ENCODE measurements at regions of chr9 and their contacts with region 1.

Region 1: DNA sequence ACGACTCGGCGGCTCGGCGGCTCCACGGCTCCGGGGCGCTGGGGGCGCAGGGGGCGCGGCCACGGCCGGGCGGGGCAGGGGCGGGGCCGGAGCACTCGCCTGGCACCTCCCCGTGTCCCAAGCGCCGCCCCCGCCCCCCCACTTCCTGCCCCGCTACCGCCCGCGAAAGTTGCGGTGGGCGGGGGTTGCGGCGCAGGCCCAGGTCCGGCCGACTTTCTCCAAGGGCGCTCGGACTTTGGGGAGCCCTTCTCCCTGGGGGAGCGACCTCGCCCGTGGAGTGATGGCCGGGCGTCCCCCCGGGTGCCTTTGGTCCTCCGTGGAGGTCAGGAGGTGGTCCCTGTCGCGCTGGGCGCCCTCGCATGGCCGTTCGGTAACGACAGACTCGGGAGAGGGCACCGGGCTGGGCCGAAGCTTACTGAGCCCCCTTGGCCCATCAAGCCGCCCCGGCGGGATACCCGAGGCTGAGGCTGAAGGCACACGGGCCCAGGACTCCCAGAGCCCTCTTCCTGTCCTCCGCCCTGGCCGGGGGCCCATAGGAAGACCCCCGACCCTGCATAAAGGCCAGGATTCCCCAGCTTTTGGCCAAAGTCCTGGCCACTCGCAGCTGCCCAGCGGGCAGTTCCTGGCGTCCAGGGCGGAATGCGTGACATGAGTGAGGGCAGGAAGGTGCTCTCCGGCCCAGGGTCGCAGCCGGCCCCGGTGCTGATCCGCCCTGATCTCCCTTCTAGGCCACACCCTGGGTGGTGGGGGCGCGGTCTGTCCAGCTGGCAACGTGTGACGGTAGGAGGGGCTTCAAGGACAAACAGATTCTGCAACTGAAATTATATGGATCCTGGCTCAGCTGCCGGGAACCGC is 883 bp upstream of the VAV2 start:
- DNase-seq: peak in 7 of 10 donors; percentile 39 to 90 (median 52)

Region 2: GRCh38 chr9:133782157-133783130 is 210.6 kb before region 1 on chr9:
- intact Hi-C with region 1: loop called (anchors 2 kb)
- DNase-seq: peak; percentile 74 to 96 (median 84)

Region 3: DNA sequence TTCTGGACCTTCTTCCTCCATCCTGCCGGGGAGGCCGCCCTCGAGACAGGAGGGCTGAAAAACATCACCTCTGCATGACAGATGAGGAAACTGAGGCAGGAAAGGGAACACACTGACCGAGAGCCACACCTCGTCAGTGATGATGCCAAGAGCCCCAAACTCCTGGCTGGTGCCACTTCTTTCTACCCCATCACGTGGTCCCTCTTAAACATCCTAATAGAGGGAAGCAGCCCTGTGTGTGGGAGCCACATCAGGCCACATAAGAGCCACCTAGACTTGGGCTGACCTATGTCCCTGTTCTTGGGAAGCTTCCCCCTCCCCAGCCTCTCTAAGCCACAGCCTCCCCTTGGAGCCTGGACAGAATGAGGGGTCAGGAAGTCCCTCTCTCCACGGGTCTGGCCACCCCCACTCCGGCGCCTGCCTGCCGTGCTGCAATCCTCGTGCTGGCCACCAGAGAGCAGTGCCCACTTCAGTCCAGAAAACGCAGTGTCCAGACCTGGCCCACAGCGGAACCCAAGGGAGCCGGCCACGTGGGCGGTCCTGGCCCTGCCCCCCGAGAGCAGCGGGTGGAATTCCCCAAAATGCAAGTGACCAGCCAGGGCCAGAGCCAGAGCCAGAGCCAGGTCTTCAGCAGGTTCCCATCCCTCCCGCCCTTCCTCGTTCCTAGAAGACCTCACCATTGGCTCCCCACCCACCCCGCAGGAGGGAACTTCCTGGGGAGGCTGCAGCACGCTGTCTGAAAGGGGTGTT is 200.1 kb before region 1 on chr9:
- intact Hi-C with region 1: loop called (anchors 1 kb)
- DNase-seq: peak; percentile 51 to 95 (median 78)

Region 4: DNA sequence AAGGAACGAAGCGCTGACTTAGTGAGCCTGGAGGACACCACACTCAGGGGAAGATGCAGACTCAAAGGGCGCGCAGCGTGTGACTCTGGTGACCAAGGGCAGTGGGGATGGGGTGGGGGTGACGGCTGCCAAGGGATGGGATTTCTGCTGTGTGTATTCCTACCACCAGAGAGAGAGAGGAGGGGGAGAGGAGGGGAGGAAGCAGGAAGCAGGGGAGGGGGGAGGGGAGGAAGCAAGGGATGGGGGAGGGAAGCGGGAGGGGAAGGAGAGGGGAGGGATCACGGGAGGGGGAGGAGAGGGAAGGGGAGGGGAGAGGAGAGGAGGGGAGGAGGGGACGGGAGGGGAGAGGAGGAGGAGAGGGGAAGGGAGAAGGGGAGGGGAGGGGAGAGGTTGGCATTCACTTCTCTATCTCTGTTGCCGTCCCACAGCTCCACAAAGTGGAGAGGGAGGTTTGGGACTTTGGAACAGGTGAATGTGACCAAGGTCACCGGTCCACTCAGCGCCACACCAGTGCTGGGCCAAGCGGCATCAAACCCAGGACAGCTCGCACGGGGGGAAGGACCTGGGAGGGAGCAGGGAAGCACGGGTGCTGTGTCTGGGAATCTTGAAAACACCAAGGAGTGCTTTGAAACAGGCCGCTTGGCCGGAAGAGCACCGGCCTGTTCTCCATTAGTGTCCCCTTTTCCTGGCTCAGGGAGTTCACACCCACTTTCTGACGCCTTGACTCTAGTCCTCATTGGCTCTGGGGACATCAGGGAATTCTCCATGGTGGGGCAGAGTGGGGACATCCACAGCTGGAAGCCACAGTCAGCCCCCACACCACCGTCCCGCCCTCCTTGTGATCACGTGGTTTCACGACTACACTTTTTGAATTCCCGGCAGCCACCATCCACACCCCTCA is 78.3 kb before region 1 on chr9:
- intact Hi-C with region 1: loop called (anchors 2 kb)
- DNase-seq: no peak